Right cardiac atrium (tissue), 5 donors: ENCODE measurements at regions of chr1 and their contacts with region 1.

Region 1: DNA sequence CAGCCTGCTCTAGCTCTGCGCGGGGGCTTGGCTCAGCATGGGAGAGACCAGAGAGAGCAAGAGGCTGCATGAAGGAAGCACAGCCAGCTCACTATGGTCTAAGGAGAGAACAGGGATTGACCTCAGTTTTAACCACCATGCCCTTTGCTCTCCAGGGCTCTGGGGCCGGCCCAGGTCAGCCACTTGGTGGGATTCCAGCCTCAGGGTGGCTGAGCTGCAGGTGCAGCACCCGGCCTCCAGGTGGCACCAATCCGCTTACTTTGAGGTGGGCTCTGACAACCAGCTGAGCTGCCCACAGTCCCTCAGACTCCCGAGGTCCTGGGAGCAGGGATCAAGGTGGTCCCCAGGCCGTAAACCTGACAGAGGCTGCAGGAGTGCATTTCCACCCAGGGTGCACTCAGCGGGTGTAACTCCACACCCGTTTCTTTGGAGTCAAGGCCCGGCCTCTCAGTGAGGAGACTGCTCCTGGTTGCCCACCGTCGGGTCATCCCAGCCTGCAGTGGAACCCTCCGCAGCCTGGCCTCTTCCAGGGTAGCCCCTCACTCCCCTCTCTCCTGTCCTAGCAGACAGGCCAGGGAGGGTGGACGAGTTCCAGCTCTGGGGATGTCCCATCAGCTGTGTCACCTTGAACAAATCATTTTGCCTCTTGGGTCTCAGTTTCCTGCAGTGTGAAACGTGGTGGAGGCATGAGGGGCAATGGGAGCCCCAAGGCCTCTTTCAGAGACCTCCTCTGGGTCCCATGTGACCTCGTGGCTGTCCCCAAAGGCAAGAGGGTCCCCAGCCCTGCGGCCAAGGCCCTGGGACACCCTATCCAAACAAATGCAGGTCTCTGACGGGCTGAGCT is 607 bp upstream of the LGR6 start:
- DNase-seq: peak; percentile 51 to 85 (median 85)
- ATAC-seq: peak; percentile 49 to 65
- H3K4me3 ChIP-seq: no peak overlapping the region
- H3K27ac ChIP-seq: no peak overlapping the region
- H3K4me1 ChIP-seq: no peaks in the 10 kb centered on the region
- H3K27me3 ChIP-seq: no peaks in the 10 kb centered on the region

Region 2: DNA sequence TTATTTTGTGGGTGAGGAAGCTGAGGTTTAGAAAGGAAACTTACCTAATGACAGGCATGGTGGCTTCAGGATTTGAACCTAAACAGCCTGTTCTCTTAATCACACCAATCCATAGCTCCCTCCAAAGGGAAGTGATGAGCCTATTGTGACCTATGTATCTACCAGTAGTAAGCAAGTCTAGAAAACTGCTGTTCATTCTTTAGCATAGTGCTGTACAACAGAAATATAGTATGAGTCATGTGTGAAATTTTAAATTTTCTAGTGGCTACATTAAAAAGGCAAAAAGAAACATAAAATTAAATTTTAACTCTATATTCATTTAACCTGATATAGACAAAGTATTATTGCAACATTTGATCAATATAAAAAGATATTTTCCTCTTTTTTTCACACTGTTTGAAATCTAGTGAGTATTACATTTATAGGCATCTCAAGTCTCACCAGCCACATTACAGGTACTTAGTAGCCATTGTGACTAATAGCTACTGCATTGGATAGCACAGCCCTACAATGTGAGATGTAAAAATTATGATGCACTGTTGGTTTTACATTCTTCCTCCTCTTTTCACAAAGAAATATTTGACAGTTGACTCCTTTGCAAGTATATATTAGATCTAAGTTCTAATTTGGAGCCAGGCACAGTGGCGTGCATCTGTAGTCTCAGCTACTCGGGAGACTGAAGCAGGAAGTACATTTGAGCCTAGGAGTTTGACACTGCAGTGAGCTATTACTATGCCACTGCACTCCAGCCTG is 347.5 kb before region 1 on chr1:
- intact Hi-C with region 1: no loop called
- DNase-seq: no peak
- ATAC-seq: no peak
- H3K4me3 ChIP-seq: no peak overlapping the region
- H3K27ac ChIP-seq: no peak overlapping the region
- H3K4me1 ChIP-seq: no peaks in the 10 kb centered on the region
- H3K27me3 ChIP-seq: no peaks in the 10 kb centered on the region

Region 3: GRCh38 chr1:202315576-202316168 is 122.7 kb after region 1 on chr1:
- intact Hi-C with region 1: loop called (anchors 2 to 5 kb)
- DNase-seq: peak; percentile 68 to 86 (median 84)
- ATAC-seq: peak; percentile 65 to 78
- H3K4me3 ChIP-seq: no peak overlapping the region
- H3K27ac ChIP-seq: no peak overlapping the region
- H3K4me1 ChIP-seq: peaks cover 5% of the 10 kb centered on the region
- H3K27me3 ChIP-seq: no peaks in the 10 kb centered on the region

Region 4: GRCh38 chr1:202723705-202724104 is 530.7 kb after region 1 on chr1:
- intact Hi-C with region 1: loop called in 3 of 4 experiments (anchors 5 to 10 kb)
- DNase-seq: no peak
- ATAC-seq: no peak
- H3K4me3 ChIP-seq: no peak overlapping the region
- H3K27ac ChIP-seq: no peak overlapping the region
- H3K4me1 ChIP-seq: no peaks in the 10 kb centered on the region
- H3K27me3 ChIP-seq: no peaks in the 10 kb centered on the region